GM10248 (cell line): ENCODE measurements at regions of chr12 and their contacts with region 1.

Region 1: DNA sequence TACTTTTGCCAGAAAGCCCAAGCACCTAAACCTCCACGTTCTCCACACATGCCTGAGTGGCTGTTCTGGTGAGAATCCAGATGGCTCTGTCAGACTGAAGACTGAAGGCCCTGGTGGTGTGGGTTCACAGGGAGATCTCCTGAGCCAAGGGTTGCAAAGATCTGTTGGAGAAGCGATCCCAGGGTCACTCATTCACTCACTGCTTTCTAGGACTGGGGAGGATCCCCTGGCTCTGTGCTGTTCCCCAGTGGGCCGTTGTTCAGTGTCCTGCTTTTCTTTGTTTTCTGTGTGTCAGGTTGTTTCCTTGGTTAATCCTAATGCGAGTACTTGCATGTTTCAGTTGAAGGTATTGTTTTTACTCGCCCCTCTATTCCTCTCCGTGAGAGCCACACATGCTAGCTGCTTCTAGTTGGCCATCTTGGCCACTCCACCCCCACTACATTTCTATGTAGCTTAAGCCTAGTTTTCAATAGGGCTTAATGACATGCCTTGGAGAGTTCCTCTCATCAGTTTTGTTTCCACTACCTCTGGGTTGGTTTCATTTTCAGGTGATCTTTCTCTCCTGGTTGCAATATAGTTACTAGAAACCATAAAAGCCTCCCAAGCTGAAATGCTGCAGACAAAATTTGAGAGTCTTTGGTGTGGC is 144.5 kb upstream of the SLC38A2 start:
- DNase-seq: peak; percentile 70
- CTCF ChIP-seq: no peak

Region 2: DNA sequence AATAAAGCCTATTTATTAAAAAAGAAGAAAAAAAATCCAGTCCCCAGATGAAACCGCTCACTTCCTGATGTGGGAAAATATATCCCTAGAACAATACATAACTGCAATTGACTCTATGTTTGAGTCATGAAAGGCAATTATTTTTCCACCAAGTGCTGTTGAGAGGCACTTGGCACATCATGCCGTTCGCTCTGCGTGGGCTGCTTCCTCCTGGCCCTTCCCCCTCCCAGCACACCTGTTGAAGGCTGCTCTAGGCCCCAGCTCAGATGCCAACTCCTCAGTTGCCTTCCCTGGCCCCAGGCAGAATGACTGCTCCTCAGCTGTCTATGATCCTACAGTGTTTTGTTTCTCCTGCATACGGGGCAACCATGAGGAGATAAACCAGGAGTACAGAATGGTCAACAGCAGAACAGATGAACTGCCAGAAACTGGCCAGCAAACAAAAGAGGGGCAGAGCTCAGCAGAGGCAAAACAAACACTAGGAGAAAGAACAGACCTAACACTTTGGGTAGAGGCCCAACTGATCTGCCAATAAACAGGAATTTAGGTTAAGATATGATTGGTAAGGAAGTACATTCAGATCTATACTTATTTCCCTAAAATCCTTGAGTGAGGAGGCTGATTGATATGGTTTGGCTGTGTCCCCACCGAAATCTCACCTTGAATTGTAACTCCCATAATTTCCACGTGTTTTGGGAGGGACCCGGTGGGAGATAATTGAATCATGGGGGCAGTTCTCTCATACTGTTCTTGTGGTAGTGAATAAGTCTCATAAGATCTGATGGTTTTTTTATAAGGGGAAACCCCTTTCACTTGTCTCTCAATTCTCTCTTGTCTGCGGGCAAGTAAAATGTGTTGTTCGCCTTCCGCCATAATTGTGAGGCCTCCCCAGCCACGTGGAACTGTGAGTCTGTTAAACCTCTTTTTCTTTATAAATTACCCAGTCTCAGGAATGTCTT is 306.9 kb before region 1 on chr12:
- CTCF ChIA-PET with region 1: no interaction called
- POLR2A ChIA-PET with region 1: no interaction called
- DNase-seq: no peak
- CTCF ChIP-seq: no peak

Region 3: DNA sequence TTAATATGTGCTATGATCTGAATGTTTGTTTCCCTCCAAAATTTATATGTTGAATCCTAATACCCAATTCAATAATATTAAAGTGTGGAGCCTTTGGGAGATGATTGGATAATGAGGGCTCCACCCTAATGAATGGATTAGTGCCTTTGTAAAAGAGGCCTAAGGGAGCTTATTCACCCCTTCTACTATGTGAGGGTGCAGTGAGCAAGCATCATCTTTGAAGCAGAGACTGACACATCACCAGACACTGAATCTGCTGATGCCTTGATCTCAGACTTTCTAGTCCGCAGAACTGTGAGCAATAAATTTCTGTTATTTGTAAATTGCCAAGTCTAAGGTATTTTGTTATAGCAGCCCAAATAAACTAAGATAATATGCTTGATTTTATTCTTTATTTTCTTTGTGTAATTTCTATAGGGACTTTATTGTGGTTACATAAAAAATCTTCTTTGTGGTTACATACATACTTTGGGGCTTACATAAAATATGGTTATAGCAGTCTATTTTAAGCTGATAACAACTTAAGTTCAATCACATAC is 13.3 kb before region 1 on chr12:
- CTCF ChIA-PET with region 1: no interaction called
- POLR2A ChIA-PET with region 1: no interaction called
- DNase-seq: no peak
- CTCF ChIP-seq: no peak

Region 4: DNA sequence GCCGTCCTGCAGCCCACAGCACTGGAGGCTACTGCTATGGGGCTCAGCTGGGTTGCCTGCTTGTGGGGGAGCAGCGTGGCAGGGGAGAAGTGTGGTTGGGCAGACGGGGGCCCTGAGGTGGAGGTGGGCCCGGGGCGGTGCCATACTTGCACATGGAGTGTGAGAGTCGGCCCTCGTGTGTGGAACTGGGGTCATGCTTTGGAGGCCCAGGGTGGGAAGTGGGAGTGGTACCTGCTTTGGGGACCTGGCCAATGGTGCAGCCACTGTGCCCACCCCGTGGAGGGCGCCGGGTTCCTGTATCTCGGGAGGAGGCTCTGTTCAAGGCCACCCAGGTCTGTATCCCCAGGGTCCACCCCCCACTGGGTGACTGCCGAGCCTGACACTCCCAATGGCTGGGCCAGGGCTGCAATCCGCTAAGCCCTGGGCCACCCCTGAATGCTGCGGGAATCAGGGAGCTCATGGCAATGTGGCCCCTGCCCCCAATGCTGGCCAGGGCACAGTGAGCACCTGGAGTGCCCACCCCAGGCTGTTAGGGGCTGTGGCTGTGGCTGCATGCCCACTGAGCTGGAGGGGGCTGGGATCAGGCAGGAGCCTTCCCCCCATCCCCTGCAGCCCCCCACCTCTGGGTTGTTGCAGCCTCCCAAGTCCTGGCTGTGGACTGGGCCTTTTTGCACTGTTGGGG is 13.5 kb after region 1 on chr12:
- CTCF ChIA-PET with region 1: interaction called, 18 read pairs
- POLR2A ChIA-PET with region 1: no interaction called
- DNase-seq: no peak
- CTCF ChIP-seq: no peak